Colonic mucosa (tissue), 4 donors: ENCODE measurements at regions of chr11 and their contacts with region 1.

Region 1: DNA sequence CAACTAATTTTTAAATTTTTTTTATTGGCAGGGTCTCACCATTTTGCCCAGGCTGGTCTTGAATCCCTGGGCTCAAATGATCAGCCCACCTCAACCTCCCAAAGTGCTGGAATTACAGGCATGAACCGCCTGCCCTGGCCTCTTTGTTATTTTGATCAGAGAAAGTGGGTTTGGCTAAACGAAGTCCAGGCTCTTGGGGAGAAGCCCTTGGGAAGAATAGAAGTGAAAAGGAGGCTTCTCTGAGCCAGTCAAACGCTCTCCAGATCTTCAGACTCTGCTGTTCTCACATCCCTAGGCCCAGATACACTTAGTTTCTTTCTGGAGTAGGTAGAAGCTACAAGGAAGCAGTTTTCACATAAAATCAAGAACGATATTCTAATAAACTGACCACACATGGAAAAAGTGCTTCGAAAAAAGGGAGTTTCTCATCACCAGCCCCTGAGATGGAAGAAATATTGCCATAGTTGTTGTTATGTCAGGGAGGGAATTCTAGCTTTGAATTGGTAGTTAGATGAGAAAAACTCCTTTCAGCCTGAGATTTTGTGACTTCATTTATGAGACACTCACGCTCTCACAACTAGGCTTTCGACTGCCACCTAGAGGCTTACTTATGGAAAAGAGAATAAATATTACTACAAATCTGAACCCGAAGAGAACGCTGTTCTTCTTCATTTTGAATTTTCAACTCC is 41.7 kb upstream of the AQP11 start:
- DNase-seq: peak; percentile 65
- H3K4me3 ChIP-seq: no peak overlapping the region
- H3K27ac ChIP-seq: no peak overlapping the region
- H3K4me1 ChIP-seq: no peaks in the 10 kb centered on the region
- H3K27me3 ChIP-seq: no peaks in the 10 kb centered on the region
- CTCF ChIP-seq: peak; percentile 45

Region 2: GRCh38 chr11:77127232-77127911 is 420.6 kb before region 1 on chr11:
- intact Hi-C with region 1: loop called (anchors 5 kb)
- DNase-seq: peak; percentile 70
- H3K4me3 ChIP-seq: peak overlapping the region; percentile 31
- H3K27ac ChIP-seq: no peak overlapping the region
- H3K4me1 ChIP-seq: peaks cover 8% of the 10 kb centered on the region
- H3K27me3 ChIP-seq: no peaks in the 10 kb centered on the region
- CTCF ChIP-seq: peak; percentile 99

Region 3: DNA sequence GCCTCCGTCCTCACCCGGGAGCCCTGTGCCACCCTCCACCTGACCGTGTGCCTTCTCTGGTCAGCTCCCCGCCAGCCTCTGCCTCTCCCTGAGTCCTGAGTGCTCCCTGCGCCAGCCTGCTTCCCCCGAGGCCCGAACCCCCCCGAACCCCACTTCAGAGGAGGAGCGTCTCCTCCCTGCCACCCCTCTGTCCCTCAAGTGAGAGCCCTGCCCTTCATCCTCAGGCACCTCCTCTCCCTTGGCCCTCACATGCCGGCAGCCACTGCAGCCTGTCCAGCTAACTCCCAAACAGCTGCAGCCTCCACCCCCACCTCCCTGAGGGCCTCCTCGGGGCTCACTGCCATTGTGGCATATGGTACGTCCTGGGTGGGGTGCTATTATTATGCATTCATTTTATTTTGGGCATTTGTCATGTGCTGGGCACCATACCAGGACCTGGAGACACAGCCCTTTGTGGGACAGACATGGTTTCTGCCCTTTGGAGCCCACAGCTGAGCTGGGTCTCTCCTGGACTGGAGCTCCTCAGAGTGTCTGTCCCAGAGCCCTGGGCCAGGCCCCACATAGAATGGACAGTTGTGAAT is 352.7 kb before region 1 on chr11:
- intact Hi-C with region 1: loop called (anchors 2 kb)
- DNase-seq: no peak
- H3K4me3 ChIP-seq: no peak overlapping the region
- H3K27ac ChIP-seq: no peak overlapping the region
- H3K4me1 ChIP-seq: no peaks in the 10 kb centered on the region
- H3K27me3 ChIP-seq: no peaks in the 10 kb centered on the region
- CTCF ChIP-seq: no peak

Region 4: GRCh38 chr11:77479746-77480352 is 68.2 kb before region 1 on chr11:
- intact Hi-C with region 1: no loop called
- DNase-seq: no peak
- H3K4me3 ChIP-seq: no peak overlapping the region
- H3K27ac ChIP-seq: no peak overlapping the region
- H3K4me1 ChIP-seq: no peaks in the 10 kb centered on the region
- H3K27me3 ChIP-seq: no peaks in the 10 kb centered on the region
- CTCF ChIP-seq: no peak